Activated T-helper 1 cell treated with anti-CD3 and anti-CD28 coated beads, Interleukin-12 subunit alpha, Interleukin-12 subunit beta, Interleukin-2, Interleukin-4 antibody, amounts not matched to agents 30 ng/mL and 10 ng/mL and 1 ng/mL, durations not matched to agents 14 hours and 24 hours and 36 hours (primary cell): ENCODE measurements at regions of chr15 and their contacts with region 1.

Region 1: GRCh38 chr15:55290528-55291057 is 980 bp upstream of the RAB27A start:
- DNase-seq: peak; percentile 76
- H3K4me3 Mint-ChIP-seq: peak overlapping the region; percentile 86
- H3K27ac Mint-ChIP-seq: peak overlapping the region; percentile 91
- H3K4me1 Mint-ChIP-seq: peaks cover 31% of the 10 kb centered on the region
- H3K27me3 Mint-ChIP-seq: no peaks in the 10 kb centered on the region

Region 2: GRCh38 chr15:55241891-55242290 is 48.7 kb before region 1 on chr15:
- intact Hi-C with region 1: loop called (anchors 1 kb)
- DNase-seq: no peak
- H3K4me3 Mint-ChIP-seq: no peak overlapping the region
- H3K27ac Mint-ChIP-seq: peak overlapping the region; percentile 41
- H3K4me1 Mint-ChIP-seq: peaks cover 76% of the 10 kb centered on the region
- H3K27me3 Mint-ChIP-seq: no peaks in the 10 kb centered on the region

Region 3: DNA sequence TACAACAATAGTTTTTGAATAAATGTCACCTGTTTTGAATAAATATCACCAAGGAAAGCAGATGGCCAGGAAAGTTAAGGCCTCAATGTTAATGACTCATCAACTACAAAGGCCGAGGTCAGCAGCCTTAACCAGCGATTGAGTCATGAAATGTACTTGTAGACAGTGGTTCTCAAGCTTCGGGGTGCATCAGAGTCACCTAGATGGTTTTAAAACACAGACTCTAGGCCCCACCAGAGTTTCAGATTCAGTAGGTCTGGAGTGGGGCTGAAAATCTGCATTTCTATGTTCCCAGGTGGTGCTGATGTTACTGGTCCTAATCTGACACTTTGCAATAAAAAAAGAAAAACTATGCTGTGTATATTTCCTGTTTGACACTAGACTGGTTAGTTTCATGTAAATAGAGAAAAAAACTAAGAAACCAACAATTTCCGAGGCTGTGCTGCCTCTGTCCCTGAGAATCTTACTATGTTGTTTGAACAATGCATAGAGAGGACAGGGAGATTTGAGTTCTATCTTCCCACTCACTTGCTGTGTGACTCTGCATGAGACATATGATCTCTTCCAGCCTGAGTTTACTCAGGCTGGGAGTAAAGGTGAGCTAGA is 10.7 kb before region 1 on chr15:
- intact Hi-C with region 1: loop called (anchors 1 kb)
- DNase-seq: peak; percentile 47
- H3K4me3 Mint-ChIP-seq: peak overlapping the region; percentile 57
- H3K27ac Mint-ChIP-seq: peak overlapping the region; percentile 99
- H3K4me1 Mint-ChIP-seq: peaks cover 92% of the 10 kb centered on the region
- H3K27me3 Mint-ChIP-seq: no peaks in the 10 kb centered on the region

Region 4: GRCh38 chr15:55318588-55319494 is 28.2 kb after region 1 on chr15 and contains the starts of genes PIGB and PIGBOS1:
- intact Hi-C with region 1: loop called (anchors 1 kb)
- DNase-seq: peak; percentile 78
- H3K4me3 Mint-ChIP-seq: peak within 1 kb of the TSS; percentile 100
- H3K27ac Mint-ChIP-seq: peak within 1 kb of the TSS; percentile 99
- H3K4me1 Mint-ChIP-seq: peaks cover 63% of the 10 kb centered on the region
- H3K27me3 Mint-ChIP-seq: no peaks in the 10 kb centered on the region
- total RNA-seq, gene PIGB: 14.0 and 19.9 TPM in 2 replicates
- total RNA-seq, gene PIGBOS1: 10.3 and 11.8 TPM in 2 replicates

Region 5: GRCh38 chr15:55407949-55408791 is 117.6 kb after region 1 on chr15 and contains the starts of genes CCPG1 and PIERCE2:
- intact Hi-C with region 1: loop called (anchors 1 kb)
- DNase-seq: peak; percentile 89
- H3K4me3 Mint-ChIP-seq: peak within 1 kb of the TSS; percentile 98
- H3K27ac Mint-ChIP-seq: peak within 1 kb of the TSS; percentile 95
- H3K4me1 Mint-ChIP-seq: peaks cover 26% of the 10 kb centered on the region
- H3K27me3 Mint-ChIP-seq: no peaks in the 10 kb centered on the region
- total RNA-seq, gene CCPG1: 15.0 TPM in 2 replicates
- total RNA-seq, gene PIERCE2: not detected in 2 replicates